GM12878 (cell line): ENCODE measurements at regions of chr7 and their contacts with region 1.

Region 1: GRCh38 chr7:104923010-104923421 is 91.0 kb upstream of the KMT2E start:
- DNase-seq: peak; percentile 71
- ATAC-seq: peak; percentile 99
- H3K4me3 ChIP-seq: no peak overlapping the region
- H3K27ac ChIP-seq: no peak overlapping the region
- H3K4me1 ChIP-seq: peaks cover 6% of the 10 kb centered on the region; the same call in 1 of the 2 replicates
- H3K27me3 ChIP-seq: no peaks in the 10 kb centered on the region
- CTCF ChIP-seq: peak; percentile 86 to 98 (median 89); a peak in 5 of 6 replicates
- EP300 ChIP-seq: no peak
- POLR2A ChIP-seq: no peak
- RAD21 ChIP-seq: peak; percentile 97

Region 2: DNA sequence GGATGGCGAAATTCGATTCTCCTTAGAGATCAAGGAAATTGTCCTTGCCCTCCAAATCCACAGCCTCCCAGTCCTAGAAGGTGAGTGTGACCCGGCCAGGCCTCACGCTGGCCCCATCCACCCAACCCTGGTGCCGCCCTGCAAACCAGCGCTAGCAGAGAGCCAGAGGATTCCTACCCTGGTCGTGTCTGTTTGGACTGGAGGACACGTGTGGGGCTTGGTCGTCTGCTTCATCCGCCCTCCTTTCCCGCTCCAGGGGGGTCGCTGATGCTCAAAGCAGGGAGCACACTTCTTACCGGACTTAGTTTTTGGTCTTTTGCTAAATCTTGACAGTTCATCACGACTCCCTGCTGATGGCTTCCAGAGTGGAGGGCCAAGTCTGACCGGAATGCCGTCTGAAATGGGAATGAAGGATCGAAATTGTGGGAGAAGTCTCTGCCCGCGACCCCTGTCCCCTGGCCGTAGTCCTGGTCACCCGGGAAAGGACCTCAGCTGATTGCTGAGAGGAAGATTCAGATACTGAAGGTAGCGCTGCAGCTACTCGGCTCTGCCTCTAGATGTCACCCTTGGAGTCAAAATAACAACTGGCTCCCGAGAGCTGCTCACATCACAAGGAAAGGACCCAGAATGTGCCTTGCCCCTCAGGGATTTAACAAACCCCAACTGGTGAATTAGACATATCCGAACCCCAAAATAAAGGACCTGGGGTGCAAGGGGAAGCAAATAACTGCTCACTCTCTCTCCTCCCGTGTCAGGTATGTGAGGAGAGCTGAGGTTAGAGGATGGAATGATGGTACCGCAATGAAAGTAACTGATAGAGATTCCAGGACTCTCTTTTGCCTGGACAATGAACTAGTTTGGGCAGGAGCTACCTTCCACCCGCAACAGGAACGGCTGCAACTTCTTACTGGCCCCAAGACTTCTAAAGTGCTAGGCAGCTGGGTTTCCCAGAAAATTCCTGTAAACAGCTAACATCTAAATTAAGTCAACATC is 691.7 kb before region 1 on chr7:
- CTCF ChIA-PET with region 1: interaction called, 40 read pairs
- POLR2A ChIA-PET with region 1: interaction called, 3 read pairs
- RAD21 ChIA-PET with region 1: interaction called, 40 read pairs
- SMC1A ChIA-PET with region 1: interaction called, 25 read pairs
- in situ Hi-C with region 1: loop called (anchors 5 kb)
- intact Hi-C with region 1: loop called (anchors 1 kb)
- DNase-seq: no peak
- ATAC-seq: peak; percentile 96
- H3K4me3 ChIP-seq: no peak overlapping the region
- H3K27ac ChIP-seq: no peak overlapping the region
- H3K4me1 ChIP-seq: no peaks in the 10 kb centered on the region
- H3K27me3 ChIP-seq: no peaks in the 10 kb centered on the region
- CTCF ChIP-seq: peak; percentile 83 to 91 (median 87)
- EP300 ChIP-seq: no peak
- POLR2A ChIP-seq: no peak
- RAD21 ChIP-seq: peak; percentile 74

Region 3: GRCh38 chr7:104848138-104848990 is 74.7 kb before region 1 on chr7:
- CTCF ChIA-PET with region 1: interaction called, 33 read pairs
- POLR2A ChIA-PET with region 1: no interaction called
- RAD21 ChIA-PET with region 1: interaction called, 6 read pairs
- SMC1A ChIA-PET with region 1: interaction called, 20 read pairs
- in situ Hi-C with region 1: no loop called
- intact Hi-C with region 1: loop called (anchors 5 kb)
- DNase-seq: no peak
- ATAC-seq: peak; percentile 78
- H3K4me3 ChIP-seq: no peak overlapping the region
- H3K27ac ChIP-seq: no peak overlapping the region
- H3K4me1 ChIP-seq: peaks cover 4% of the 10 kb centered on the region; the same call in 1 of the 2 replicates
- H3K27me3 ChIP-seq: no peaks in the 10 kb centered on the region
- CTCF ChIP-seq: peak; percentile 76 to 89 (median 79)
- EP300 ChIP-seq: no peak
- POLR2A ChIP-seq: no peak
- RAD21 ChIP-seq: peak; percentile 90

Region 4: DNA sequence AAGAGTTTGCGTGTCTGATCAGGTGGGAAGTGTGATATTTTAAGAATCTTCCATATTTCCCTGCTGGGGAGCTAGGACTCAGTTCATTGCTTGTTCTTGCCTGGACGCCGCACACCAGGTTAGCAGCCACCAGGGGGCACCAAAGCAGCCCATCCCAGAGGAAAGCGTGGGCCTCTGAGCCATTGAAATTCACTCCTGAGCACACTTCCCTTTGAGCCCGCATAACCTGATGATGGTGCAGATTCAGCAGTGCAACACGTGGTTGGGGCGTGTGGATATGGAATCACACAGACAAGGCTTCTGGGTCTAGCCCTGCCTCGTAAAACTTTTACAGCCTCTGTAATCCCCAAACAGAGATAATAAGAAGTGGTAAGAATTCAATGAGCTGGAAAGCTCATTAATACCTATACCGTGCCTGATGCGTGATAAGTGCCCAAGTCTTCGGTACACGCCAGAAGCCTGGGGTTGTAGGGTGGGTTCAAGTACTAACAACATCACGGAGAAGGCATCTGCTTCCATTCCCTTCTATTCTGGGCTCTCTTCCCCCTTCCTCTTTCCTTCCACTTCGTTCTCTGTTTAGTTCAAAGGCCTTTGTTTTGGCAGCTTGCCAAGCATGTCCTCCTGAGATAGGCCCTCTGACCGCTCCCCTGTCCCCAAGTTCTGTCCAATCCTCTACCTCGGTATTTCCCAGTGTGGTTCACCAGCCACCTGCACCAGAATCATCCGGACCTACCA is 39.1 kb before region 1 on chr7:
- CTCF ChIA-PET with region 1: interaction called, 581 read pairs
- POLR2A ChIA-PET with region 1: interaction called, 15 read pairs
- RAD21 ChIA-PET with region 1: interaction called, 217 read pairs
- SMC1A ChIA-PET with region 1: interaction called, 413 read pairs
- in situ Hi-C with region 1: loop called (anchors 5 kb)
- intact Hi-C with region 1: loop called (anchors 1 kb)
- DNase-seq: peak; percentile 61
- ATAC-seq: peak; percentile 92
- H3K4me3 ChIP-seq: no peak overlapping the region
- H3K27ac ChIP-seq: no peak overlapping the region
- H3K4me1 ChIP-seq: peaks cover 19% of the 10 kb centered on the region
- H3K27me3 ChIP-seq: no peaks in the 10 kb centered on the region
- CTCF ChIP-seq: peak; percentile 93 to 96 (median 94); a peak in 5 of 6 replicates
- EP300 ChIP-seq: no peak
- POLR2A ChIP-seq: no peak
- RAD21 ChIP-seq: peak; percentile 89

Region 5: GRCh38 chr7:104908636-104909035 is 14.4 kb before region 1 on chr7:
- CTCF ChIA-PET with region 1: interaction called, 33 read pairs
- POLR2A ChIA-PET with region 1: no interaction called
- RAD21 ChIA-PET with region 1: interaction called, 8 read pairs
- SMC1A ChIA-PET with region 1: interaction called, 23 read pairs
- in situ Hi-C with region 1: no loop called
- intact Hi-C with region 1: no loop called
- DNase-seq: no peak
- ATAC-seq: no peak
- H3K4me3 ChIP-seq: no peak overlapping the region
- H3K27ac ChIP-seq: no peak overlapping the region
- H3K4me1 ChIP-seq: no peaks in the 10 kb centered on the region
- H3K27me3 ChIP-seq: no peaks in the 10 kb centered on the region
- CTCF ChIP-seq: no peak
- EP300 ChIP-seq: no peak
- POLR2A ChIP-seq: no peak
- RAD21 ChIP-seq: no peak

Region 6: DNA sequence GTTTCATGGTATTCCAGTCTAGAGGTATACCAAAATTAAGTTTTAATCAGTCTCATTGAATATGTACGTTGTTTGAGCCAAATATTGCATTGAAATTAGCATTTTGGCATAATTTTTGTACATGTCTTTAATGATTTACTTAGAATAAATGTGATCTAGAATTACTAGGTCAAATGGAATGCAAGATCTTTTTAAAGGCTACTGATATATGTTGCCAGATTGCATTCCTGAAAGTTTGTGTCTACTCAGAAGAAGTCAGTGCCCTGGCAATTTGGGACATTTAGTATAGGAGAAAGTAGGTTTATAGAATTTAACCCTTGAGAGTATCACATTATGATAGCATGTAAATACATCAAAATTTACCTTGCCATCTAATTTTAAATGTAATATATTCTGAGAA is 123.4 kb after region 1 on chr7:
- CTCF ChIA-PET with region 1: interaction called, 7 read pairs
- POLR2A ChIA-PET with region 1: interaction called, 3 read pairs
- RAD21 ChIA-PET with region 1: interaction called, 4 read pairs
- SMC1A ChIA-PET with region 1: interaction called, 7 read pairs
- in situ Hi-C with region 1: no loop called
- intact Hi-C with region 1: loop called (anchors 2 kb)
- DNase-seq: no peak
- ATAC-seq: no peak
- H3K4me3 ChIP-seq: no peak overlapping the region
- H3K27ac ChIP-seq: no peak overlapping the region
- H3K4me1 ChIP-seq: no peaks in the 10 kb centered on the region
- H3K27me3 ChIP-seq: no peaks in the 10 kb centered on the region
- CTCF ChIP-seq: no peak
- EP300 ChIP-seq: no peak
- POLR2A ChIP-seq: no peak
- RAD21 ChIP-seq: no peak

Region 7: GRCh38 chr7:105461518-105461917 is 538.5 kb after region 1 on chr7:
- CTCF ChIA-PET with region 1: no interaction called
- POLR2A ChIA-PET with region 1: no interaction called
- RAD21 ChIA-PET with region 1: no interaction called
- SMC1A ChIA-PET with region 1: no interaction called
- in situ Hi-C with region 1: no loop called
- intact Hi-C with region 1: no loop called
- DNase-seq: no peak
- ATAC-seq: no peak
- H3K4me3 ChIP-seq: no peak overlapping the region
- H3K27ac ChIP-seq: no peak overlapping the region
- H3K4me1 ChIP-seq: no peaks in the 10 kb centered on the region
- H3K27me3 ChIP-seq: no peaks in the 10 kb centered on the region
- CTCF ChIP-seq: no peak
- EP300 ChIP-seq: no peak
- POLR2A ChIP-seq: no peak
- RAD21 ChIP-seq: no peak

Region 8: DNA sequence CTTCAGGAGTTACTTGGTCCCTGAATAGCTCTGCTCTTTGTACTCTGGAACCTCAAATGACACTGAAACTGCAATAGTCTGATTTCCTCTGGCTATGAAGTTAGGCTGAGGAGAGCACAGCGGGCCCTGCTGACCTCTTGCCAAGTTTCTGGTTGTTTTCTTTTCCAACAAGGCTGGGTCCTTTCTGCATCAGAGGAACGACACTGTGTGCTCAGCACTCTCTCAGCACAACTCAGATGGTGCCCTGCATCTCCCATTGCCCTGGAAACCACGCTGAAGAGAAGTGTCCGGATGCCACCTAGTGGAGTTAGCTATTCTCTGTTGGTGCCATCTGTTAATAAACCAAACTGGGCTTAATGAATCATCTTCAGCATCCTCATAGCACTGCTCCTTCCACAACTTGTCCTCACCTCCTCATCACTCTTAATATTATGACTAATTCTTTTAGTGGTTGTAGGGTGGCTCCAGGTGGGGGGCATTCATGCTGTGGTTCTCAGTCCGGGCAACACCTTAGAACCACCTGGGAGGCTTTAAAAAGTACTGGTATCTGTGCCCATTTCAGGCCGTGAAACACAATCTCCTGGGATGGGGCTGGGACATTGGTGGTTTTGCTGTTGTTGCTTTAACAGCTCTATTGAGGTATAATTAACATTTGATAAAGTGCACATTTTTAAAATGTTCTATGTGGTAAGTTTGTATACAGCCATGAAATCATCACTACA is 666.5 kb after region 1 on chr7:
- CTCF ChIA-PET with region 1: interaction called, 7 read pairs
- POLR2A ChIA-PET with region 1: no interaction called
- RAD21 ChIA-PET with region 1: interaction called, 6 read pairs
- SMC1A ChIA-PET with region 1: interaction called, 3 read pairs
- in situ Hi-C with region 1: no loop called
- intact Hi-C with region 1: loop called (anchors 2 kb)
- DNase-seq: peak; percentile 66
- ATAC-seq: peak; percentile 94
- H3K4me3 ChIP-seq: no peak overlapping the region
- H3K27ac ChIP-seq: no peak overlapping the region
- H3K4me1 ChIP-seq: peaks cover 14% of the 10 kb centered on the region
- H3K27me3 ChIP-seq: no peaks in the 10 kb centered on the region
- CTCF ChIP-seq: peak; percentile 66 to 90 (median 73); a peak in 5 of 6 replicates
- EP300 ChIP-seq: no peak
- POLR2A ChIP-seq: no peak
- RAD21 ChIP-seq: peak; percentile 83